Activated T-helper 1 cell treated with anti-CD3 and anti-CD28 coated beads, Interleukin-12 subunit alpha, Interleukin-12 subunit beta, Interleukin-2, Interleukin-4 antibody, amounts not matched to agents 30 ng/mL and 10 ng/mL and 1 ng/mL, durations not matched to agents 14 hours and 24 hours and 36 hours (primary cell): ENCODE measurements at regions of chr1 and their contacts with region 1.

Region 1: DNA sequence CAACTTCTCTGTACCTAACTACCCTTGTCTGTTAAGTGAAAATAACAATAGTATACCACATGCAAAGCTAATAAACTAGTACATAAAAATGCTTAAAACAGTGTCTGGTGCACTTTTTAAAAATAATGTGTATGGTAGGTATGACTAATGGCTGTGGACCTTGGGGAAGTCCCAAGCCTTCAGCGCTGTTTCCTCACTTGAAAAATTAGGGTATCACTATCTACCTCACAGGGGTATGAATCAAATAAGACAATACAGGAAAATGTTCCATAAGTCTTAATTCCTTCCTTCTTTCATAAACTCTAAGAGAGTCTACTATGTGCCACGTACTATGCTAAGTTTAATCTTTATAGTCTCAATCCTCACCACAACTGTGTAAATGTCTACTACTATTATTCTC is 32.0 kb downstream of the EGLN1 start:
- DNase-seq: no peak
- H3K4me3 Mint-ChIP-seq: peak overlapping the region; percentile 48
- H3K27ac Mint-ChIP-seq: peak overlapping the region; percentile 50
- H3K4me1 Mint-ChIP-seq: peaks cover 53% of the 10 kb centered on the region
- H3K27me3 Mint-ChIP-seq: no peaks in the 10 kb centered on the region

Region 2: DNA sequence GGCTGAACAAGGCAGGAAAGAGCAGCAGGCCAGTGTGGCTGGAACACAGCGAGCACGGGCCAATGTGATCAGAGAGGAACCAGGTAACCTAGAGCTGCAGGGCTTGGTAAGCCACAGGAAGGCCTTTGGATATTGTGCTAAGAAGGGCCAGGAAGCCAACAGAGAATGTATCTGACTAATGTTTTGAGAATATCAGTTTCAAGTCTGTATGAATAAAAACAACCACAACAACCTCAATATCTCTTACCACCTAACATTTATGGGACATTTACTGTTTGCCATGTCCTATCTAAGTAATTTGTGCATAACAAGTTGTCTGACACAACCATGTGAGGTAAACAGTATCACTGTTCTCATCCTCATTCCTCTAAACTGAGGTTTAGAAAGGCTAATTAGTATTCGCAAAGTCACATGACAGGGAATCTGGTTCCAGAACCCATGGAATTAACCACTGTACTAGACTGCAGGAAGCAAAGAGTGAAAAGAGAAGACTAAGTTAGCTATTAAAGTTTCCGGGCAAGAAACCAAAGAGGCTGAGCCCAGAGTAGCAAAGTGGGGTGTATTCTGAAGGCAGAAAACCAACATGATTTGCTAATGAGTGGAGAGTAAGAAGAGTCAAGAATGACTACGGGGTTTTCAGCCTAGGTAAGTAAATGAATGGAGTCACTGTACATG is 13.1 kb before region 1 on chr1:
- intact Hi-C with region 1: loop called (anchors 2 kb)
- DNase-seq: peak; percentile 13
- H3K4me3 Mint-ChIP-seq: peak overlapping the region; percentile 6
- H3K27ac Mint-ChIP-seq: peak overlapping the region; percentile 78
- H3K4me1 Mint-ChIP-seq: peaks cover 43% of the 10 kb centered on the region
- H3K27me3 Mint-ChIP-seq: no peaks in the 10 kb centered on the region